Heart left ventricle (tissue), 16 donors: ENCODE measurements at regions of chr4 and their contacts with region 1.

Region 1: DNA sequence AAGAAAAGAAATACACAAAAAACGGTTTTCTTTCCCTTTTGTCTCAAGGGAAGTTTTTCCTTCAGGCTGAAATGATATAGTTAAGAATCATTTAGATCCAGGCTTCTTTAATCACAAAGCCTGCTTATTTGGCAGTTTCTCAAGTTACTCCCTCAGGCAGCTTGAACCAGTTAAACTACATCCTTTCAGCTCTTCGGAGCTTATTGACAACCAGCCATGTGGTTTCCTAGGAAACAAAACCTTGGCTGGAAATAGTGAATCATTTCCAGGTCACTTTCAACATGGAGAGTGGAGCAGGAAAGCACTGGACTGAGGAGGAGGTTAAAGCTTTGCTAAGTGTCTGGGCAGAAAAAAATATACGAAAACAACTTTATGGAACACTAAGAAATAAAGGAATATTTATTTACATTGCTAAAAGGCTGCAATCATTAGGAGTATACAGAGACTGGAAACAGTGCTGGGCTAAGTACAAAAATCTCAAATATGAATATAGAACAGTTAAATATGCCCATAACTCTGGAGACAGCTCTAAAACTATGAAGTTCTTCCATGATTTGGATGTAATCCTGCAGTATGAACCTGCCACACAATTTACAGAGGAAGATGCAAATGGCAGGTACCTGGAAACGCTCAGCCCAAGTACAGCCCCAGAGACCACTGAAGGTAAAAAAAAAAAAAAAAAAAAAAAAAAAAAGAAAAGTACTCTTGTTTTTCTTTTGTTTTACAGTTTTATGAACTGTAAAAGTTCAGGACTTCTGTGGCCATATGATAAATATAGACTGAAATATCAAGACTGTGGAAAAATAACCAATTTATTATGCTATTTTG is 23.2 kb upstream of the AASDH start:
- DNase-seq: peak in 2 of 5 donors; percentile 59 to 71
- ATAC-seq: peak; percentile 81 to 98 (median 96)
- H3K4me3 ChIP-seq: peak overlapping the region in 11 of 12 donors; percentile 14 to 48 (median 36)
- H3K27ac ChIP-seq: peak overlapping the region in 9 of 12 donors; percentile 3 to 71 (median 35)
- H3K4me1 ChIP-seq: peaks cover 0 to 20% (median 7%) of the 10 kb centered on the region in 12 donors
- H3K27me3 ChIP-seq: no peaks in the 10 kb centered on the region
- CTCF ChIP-seq: no peak
- POLR2A ChIP-seq: no peak

Region 2: DNA sequence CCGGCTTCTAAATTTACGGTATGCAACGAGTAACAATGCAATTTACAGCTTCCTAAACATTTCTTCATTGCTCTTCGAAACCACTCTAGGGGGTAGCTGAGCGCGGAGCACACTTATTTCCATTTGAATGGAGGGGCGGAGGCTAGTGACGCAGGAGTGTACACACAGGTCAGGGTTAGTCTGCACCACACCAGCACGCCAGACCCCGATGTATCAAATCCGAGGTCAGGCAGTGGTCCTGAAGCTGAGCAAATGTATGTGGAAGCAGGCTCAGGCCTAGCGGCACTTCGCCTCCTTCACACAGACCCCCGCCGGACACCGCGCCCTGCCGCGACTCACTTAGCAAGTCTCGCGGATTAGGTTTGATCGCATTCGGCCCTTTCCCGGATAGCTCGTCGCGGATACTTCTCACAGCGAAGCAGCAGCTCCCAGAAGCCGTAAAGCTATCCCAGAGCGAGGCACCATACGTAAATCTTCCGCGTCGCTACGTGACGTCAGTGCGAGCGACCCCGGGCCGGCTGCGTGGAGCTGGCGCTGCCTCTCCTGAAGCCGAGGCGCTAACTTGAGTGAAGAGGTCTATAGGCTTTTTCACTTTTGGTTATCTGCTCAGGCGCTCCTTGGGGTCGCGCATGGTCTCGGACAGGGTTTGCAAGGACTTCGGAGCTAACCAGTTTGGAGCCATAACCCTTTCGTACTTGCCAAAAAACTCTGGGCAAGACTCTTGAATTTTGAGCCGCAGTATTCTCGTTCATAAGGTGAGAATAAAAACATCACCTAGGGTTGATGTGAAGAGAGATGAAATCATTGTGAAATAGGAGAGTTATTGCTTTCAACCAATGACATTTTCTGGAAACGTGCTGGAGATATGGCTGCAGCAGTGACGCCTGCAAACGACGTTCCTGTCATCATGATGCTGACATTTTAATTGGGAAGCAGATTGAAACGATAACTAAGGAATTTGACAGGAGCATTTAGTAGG is 23.1 kb before region 1 on chr4 and contains the start of gene AASDH:
- intact Hi-C with region 1: loop called in 2 of 10 experiments (anchors 2 kb)
- DNase-seq: peak; percentile 91 to 95 (median 94)
- ATAC-seq: peak; percentile 97 to 98 (median 98)
- H3K4me3 ChIP-seq: peak within 1 kb of the TSS; percentile 51 to 90 (median 78)
- H3K27ac ChIP-seq: peak within 1 kb of the TSS; percentile 85 to 99 (median 96)
- H3K4me1 ChIP-seq: peaks cover 0 to 26% (median 15%) of the 10 kb centered on the region in 12 donors
- H3K27me3 ChIP-seq: no peaks in the 10 kb centered on the region
- CTCF ChIP-seq: no peak
- POLR2A ChIP-seq: peak in 1 of 2 donors; percentile 74
- total RNA-seq, gene AASDH: 3.1 to 11.7 (median 5.3) TPM

Region 3: DNA sequence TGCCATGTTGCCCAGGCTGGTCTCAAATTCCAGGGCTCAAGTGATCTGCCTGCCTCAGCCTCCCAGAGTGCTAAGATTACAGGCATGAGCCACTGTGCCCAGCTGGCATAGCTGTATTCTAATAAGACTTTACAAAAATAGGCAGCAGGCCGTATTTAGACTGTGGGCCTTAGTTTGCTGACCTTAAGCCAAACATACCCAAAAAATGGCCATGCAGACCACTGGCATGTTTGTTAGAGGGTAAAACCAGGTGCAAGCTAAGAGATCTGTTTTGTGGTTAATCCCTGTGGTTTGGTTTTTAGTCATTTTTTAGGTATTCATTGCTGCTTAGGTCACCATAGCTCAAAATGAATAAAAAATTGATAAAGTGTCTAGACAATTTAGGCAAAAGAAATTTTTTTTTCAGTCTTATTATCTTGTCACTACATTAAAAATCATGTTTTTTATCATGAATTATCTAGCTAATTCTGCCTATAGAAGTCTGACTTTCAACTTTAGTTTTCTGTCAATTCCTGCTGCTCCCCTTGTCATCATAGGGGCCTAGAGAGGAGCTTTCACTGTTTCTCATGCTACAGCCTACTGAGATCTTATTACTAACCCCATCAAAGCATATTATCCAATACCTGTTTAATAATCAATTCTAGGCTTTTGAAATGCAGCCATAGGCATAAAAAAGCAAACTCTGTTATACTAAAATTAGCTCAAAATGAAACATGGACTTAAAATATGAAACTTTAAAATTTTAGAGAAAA is 418.5 kb after region 1 on chr4:
- intact Hi-C with region 1: no loop called
- DNase-seq: no peak
- ATAC-seq: no peak
- H3K4me3 ChIP-seq: no peak overlapping the region
- H3K27ac ChIP-seq: no peak overlapping the region
- H3K4me1 ChIP-seq: no peaks in the 10 kb centered on the region
- H3K27me3 ChIP-seq: peaks cover 0 to 2% (median 0%) of the 10 kb centered on the region in 9 donors
- CTCF ChIP-seq: no peak
- POLR2A ChIP-seq: no peak